ENCODE measurements at regions of chr4 and their contacts with region 1.

Region 1: GRCh38 chr4:52028969-52029368 is 8.8 kb upstream of the LRRC66 start:
- DNase-seq: peak; percentile 45
- H3K4me3 Mint-ChIP-seq: no peak overlapping the region
- H3K27ac Mint-ChIP-seq: no peak overlapping the region
- H3K4me1 Mint-ChIP-seq: peaks cover 3% of the 10 kb centered on the region
- H3K27me3 Mint-ChIP-seq: no peaks in the 10 kb centered on the region

Region 2: GRCh38 chr4:51831133-51831532 is 197.8 kb before region 1 on chr4:
- intact Hi-C with region 1: loop called (anchors 1 kb)
- DNase-seq: peak; percentile 88
- H3K4me3 Mint-ChIP-seq: no peak overlapping the region
- H3K27ac Mint-ChIP-seq: no peak overlapping the region
- H3K4me1 Mint-ChIP-seq: peaks cover 1% of the 10 kb centered on the region
- H3K27me3 Mint-ChIP-seq: peaks cover 16% of the 10 kb centered on the region

Region 3: GRCh38 chr4:51895813-51896408 is 133.1 kb before region 1 on chr4:
- intact Hi-C with region 1: loop called (anchors 5 kb)
- DNase-seq: peak; percentile 86
- H3K4me3 Mint-ChIP-seq: no peak overlapping the region
- H3K27ac Mint-ChIP-seq: peak overlapping the region; percentile 64
- H3K4me1 Mint-ChIP-seq: peaks cover 16% of the 10 kb centered on the region
- H3K27me3 Mint-ChIP-seq: no peaks in the 10 kb centered on the region

Region 4: GRCh38 chr4:52051619-52052474 is 22.9 kb after region 1 on chr4:
- intact Hi-C with region 1: no loop called
- DNase-seq: no peak
- H3K4me3 Mint-ChIP-seq: peak overlapping the region; percentile 76
- H3K27ac Mint-ChIP-seq: no peak overlapping the region
- H3K4me1 Mint-ChIP-seq: peaks cover 6% of the 10 kb centered on the region
- H3K27me3 Mint-ChIP-seq: peaks cover 66% of the 10 kb centered on the region

Region 5: GRCh38 chr4:52112411-52112810 is 83.4 kb after region 1 on chr4:
- intact Hi-C with region 1: no loop called
- DNase-seq: no peak
- H3K4me3 Mint-ChIP-seq: no peak overlapping the region
- H3K27ac Mint-ChIP-seq: no peak overlapping the region
- H3K4me1 Mint-ChIP-seq: no peaks in the 10 kb centered on the region
- H3K27me3 Mint-ChIP-seq: no peaks in the 10 kb centered on the region

Region 6: DNA sequence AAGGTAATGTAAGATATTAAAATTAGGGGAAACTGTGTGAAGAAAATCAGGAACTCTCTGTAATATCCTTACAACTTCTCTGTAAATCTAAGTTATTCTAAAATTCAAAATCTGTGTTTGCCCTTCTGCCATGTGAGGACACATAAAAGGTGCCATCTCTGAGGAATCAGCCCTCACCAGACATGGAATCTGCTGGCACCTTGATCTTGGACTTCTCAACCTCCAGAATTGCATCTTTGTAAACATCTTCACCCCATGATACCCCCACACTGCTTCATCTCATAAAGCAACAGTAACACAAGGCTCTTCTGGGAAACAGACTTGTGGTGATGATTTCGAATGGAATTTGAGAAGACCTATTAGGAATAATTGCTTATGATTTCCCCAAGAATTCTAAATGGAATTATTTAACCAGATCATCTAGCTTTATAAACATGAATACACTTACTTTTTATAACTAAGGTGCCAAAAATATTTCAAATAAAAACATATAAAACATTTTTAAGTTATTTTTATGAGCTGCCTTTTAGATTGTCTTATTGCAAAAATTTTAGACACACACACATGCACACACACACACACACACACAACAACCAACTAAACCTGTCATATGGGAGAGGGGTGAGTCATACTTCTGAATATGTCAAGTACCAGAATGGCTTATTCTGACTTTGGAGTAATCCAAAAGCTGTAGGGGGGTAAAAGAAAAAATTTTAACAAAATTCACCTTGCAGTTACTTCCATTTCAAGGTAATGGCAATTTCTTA is 548.1 kb after region 1 on chr4:
- intact Hi-C with region 1: no loop called
- DNase-seq: no peak
- H3K4me3 Mint-ChIP-seq: no peak overlapping the region
- H3K27ac Mint-ChIP-seq: no peak overlapping the region
- H3K4me1 Mint-ChIP-seq: no peaks in the 10 kb centered on the region
- H3K27me3 Mint-ChIP-seq: peaks cover 2% of the 10 kb centered on the region

Measured in activated CD4-positive, alpha-beta T cell treated with anti-CD3 and anti-CD28 coated beads, Interleukin-2, amount 10 ng/mL, durations not matched to agents 24 days and 14 days (primary cell).